ENCODE measurements at regions of chr5 and their contacts with region 1.

Region 1: DNA sequence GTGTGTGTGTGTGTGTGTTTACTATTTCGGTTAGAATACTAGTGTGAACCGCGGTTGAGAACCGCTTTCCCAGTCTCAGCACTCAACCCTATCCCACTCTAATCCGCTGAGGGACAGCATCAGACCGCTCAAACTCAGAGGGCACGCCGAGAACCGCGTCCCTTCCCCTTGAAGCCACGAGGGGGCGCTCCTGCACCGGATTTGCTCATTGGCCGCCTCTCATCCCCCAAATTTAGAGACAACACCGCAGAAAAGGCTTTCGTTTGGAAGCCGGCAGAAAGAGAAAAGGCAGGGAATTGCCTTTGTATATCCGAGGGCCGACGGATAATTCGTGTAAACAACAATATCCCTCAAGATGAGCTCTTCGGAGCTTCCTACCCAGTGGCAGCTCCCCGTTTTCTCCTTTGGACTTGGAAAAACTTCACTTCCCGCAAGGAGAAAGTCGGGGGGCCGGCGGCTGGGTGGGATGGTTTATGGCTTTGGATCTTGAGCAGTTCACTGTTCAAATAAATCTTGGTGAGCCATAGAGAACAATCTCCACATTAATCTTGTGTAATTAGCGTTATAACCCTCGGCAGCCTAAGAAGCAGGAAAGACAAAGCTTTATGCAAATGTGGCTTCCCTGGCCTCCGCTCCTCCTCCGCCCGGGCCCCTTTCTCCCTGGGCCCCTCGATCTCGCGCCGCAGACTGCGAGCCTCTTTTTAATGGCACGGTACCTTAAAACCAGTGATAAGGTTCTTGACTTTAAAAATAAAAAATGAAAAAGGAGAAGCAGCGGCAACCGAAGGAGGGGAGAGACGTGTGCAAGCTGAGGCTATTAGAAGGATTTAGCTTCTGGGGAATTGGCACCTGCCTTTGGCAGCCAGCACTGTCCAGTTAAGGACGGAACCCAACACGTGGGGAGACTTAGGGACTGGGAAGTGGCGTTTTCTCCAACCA is 296.8 kb downstream of the PARP8 start:
- DNase-seq: peak; percentile 49 to 82 (median 73)
- ATAC-seq: peak; percentile 76 to 86
- H3K4me3 ChIP-seq: peak overlapping the region; percentile 49
- H3K27ac ChIP-seq: no peak overlapping the region
- H3K4me1 ChIP-seq: no peaks in the 10 kb centered on the region
- H3K27me3 ChIP-seq: no peaks in the 10 kb centered on the region

Region 2: DNA sequence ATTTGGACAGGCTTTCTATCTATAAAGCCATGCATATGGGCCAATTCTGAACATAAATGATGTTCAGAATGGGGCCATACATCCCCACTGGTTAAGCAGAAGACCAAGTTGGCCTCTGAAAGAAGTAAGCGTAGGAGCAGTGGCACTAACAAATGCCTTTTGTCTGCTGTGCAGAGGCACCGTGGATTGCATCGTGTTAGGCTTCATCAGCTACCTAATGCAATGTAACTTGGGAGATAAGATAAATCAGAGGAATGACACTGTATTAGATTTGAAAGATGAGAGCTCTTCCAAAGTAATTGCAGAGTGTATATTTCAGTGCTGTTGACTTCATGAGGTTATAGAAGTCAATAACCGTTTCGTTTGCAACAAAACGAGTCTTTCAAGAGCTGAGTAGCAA is 148.6 kb before region 1 on chr5:
- intact Hi-C with region 1: no loop called
- DNase-seq: no peak
- ATAC-seq: no peak
- H3K4me3 ChIP-seq: no peak overlapping the region
- H3K27ac ChIP-seq: no peak overlapping the region
- H3K4me1 ChIP-seq: no peaks in the 10 kb centered on the region
- H3K27me3 ChIP-seq: no peaks in the 10 kb centered on the region

Region 3: GRCh38 chr5:52007230-52007858 is 1044.1 kb after region 1 on chr5:
- intact Hi-C with region 1: loop called in 3 of 4 experiments (anchors 5 to 10 kb)
- DNase-seq: no peak
- ATAC-seq: no peak
- H3K4me3 ChIP-seq: no peak overlapping the region
- H3K27ac ChIP-seq: no peak overlapping the region
- H3K4me1 ChIP-seq: no peaks in the 10 kb centered on the region
- H3K27me3 ChIP-seq: no peaks in the 10 kb centered on the region

Region 4: GRCh38 chr5:52657247-52657645 is 1694.0 kb after region 1 on chr5:
- intact Hi-C with region 1: loop called (anchors 5 to 10 kb)
- DNase-seq: no peak
- ATAC-seq: no peak
- H3K4me3 ChIP-seq: no peak overlapping the region
- H3K27ac ChIP-seq: no peak overlapping the region
- H3K4me1 ChIP-seq: no peaks in the 10 kb centered on the region
- H3K27me3 ChIP-seq: no peaks in the 10 kb centered on the region

Measured in right cardiac atrium (tissue), 5 donors.